ENCODE measurements at regions of chr1 and their contacts with region 1.

Region 1: DNA sequence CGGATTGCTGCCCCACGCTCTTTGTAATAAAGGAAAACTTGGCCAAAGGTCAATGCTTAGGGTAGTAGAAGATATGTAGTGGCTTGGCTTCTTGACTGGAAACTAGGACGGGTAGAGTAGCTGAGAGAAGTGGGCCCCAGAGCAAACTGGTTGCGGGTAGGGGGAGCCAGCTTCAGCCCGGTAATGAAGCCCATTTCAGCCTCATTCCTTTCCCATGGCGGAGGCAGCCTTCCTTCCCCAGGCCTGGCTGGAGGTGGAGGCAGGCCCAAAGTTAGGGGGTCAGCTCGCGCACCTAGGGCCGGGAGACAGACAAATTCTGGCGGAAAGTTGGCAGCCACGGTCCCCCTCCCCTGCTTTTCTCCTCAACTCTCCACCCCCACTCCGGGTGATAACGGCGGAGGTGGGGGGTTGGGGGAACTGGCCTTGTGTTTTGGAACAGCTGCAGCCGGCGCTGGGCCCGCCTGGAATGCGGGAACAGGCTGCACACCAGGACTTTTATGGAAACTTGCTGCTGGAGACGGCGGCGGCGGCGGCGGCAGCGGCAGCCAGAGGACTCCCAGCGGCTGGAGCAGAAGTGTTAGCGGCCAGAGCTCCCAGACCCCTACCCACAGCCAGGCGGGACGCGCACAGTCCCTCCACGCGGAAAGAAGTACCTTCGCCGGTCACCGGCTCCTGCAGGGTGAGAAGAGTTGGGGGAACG is at the start of gene NEXN:
- DNase-seq: peak; percentile 90
- total RNA-seq, gene NEXN: 532 TPM

Region 2: DNA sequence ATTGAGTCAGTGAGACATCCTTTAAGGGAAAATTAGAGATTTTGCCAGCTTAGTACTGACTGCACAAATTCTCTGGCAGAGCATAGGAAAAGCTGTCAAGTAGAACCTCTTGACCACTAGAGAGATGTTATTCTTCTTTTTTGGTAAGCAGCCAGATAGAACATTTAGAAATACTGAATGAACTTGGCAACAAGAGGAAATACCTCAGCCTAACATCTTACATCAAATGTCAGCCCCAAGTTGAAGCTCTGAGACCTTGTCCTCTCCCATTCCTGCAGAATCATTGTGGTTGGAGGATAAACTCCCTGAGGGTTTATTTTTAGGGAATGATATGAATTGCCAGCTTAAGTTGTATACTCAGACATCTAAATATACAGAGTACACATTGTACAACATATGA is 55.3 kb before region 1 on chr1:
- intact Hi-C with region 1: loop called (anchors 1 kb)
- DNase-seq: no peak